GM10248 (cell line): ENCODE measurements at regions of chr4 and their contacts with region 1.

Region 1: DNA sequence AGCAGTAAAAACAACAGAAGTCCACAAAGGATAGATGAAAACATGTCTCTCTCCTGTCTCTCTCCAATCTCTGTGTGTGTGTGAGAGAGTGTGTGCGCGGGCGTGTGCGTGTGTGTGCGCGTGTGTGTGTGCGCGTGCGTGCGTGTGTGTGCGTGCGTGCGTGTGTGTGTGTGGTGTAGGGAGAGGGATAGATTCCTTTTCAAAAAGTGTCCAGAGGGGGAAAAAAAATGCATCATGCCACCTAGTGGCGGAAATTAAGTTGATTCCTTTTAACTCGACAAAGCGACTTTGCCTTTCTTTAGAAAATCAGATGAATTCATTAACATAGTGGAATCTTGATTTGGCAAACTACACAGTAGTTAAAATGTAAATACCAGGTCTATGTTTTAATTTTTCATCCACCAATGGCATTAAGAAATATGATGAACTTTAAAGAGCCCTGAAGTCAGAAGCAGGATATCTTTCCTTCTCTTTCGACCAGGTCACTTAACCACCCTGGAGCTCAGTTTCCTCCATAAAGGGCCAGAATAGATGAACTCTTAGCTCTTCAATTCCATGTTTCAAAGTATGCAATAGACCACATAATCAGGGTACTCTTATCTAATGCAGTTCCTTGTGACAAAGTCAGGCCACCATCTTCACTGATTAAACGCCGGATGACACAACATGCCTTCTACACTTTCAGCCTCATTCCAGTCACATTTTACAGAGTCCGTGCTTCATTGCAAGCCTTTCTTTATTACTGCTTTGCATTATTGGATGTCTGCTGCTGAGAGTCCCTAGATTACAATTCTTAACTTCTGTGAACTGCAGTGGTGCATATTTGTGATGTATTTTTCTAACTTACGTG is 162.8 kb downstream of the FBXO8 start:
- DNase-seq: peak; percentile 34
- CTCF ChIP-seq: peak; percentile 52

Region 2: GRCh38 chr4:174096999-174097398 is 23.7 kb before region 1 on chr4:
- CTCF ChIA-PET with region 1: no interaction called
- POLR2A ChIA-PET with region 1: no interaction called
- DNase-seq: no peak
- CTCF ChIP-seq: no peak

Region 3: GRCh38 chr4:174134361-174134760 is 13.7 kb after region 1 on chr4:
- CTCF ChIA-PET with region 1: interaction called, 10 read pairs
- POLR2A ChIA-PET with region 1: no interaction called
- DNase-seq: no peak
- CTCF ChIP-seq: no peak

Region 4: GRCh38 chr4:174314770-174315169 is 194.1 kb after region 1 on chr4:
- CTCF ChIA-PET with region 1: no interaction called
- POLR2A ChIA-PET with region 1: no interaction called
- DNase-seq: no peak
- CTCF ChIP-seq: no peak